Activated naive CD4-positive, alpha-beta T cell treated with anti-CD3 and anti-CD28 coated beads for 36 hours (primary cell): ENCODE measurements at regions of chr10 and their contacts with region 1.

Region 1: DNA sequence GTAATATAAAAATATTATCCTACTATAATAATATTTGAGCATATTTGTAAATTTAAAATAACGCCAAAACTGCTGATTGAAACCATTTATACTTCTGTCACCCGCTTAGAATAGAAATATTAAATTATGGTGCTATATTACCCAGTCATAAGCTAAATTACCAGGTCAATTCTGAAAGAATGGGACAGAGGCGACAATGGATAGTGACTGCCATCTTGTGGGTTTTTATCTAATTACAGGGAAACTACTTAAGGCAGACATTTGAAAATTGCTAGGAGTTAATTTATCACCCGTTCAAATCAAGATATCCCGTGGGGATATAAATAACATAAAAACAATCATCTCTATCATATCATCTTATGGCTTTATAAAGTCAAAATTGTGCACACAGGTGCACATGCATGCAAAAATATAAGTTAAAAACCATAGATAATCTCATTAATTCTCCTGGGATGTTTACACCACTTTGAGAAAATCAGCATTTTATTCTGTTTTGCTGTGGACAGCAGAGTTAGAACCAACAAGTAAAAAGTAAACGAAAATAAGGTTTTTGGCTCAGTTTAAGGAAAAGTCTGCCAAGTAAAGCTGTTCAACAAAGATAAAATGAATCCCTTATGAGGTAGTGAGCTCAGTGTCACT is 41.3 kb upstream of the HPSE2 start:
- DNase-seq: no peak
- H3K4me3 Mint-ChIP-seq: no peak overlapping the region
- H3K27ac Mint-ChIP-seq: no peak overlapping the region
- H3K4me1 Mint-ChIP-seq: no peaks in the 10 kb centered on the region
- H3K27me3 Mint-ChIP-seq: peaks cover 11% of the 10 kb centered on the region

Region 2: GRCh38 chr10:98467506-98468346 is 809.2 kb before region 1 on chr10:
- CTCF ChIA-PET with region 1: interaction called, 5 read pairs
- intact Hi-C with region 1: loop called (anchors 1 kb)
- DNase-seq: peak; percentile 75
- H3K4me3 Mint-ChIP-seq: peak overlapping the region; percentile 79
- H3K27ac Mint-ChIP-seq: peak overlapping the region; percentile 57
- H3K4me1 Mint-ChIP-seq: peaks cover 6% of the 10 kb centered on the region
- H3K27me3 Mint-ChIP-seq: peaks cover 9% of the 10 kb centered on the region